Ascending aorta (tissue), 2 donors: ENCODE measurements at regions of chr12 and their contacts with region 1.

Region 1: DNA sequence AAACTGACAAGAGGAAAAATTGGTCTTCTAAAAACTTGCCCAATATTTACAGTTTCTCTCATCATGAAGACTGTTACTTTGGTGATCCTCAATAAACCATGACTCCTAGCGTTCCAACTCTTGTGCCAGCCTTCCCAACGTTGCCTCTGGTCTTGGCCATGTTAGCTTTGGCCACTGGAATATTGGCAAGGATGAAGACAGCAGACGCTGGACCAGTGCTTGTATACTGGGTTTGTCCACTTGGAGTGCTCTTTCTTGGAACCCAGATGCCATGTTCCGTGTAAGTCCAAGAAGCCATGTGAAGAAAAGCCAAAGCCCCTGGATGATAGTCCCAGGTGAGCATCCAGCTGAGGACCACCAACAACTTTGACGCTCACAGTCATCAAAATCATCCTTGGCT is 379.6 kb downstream of the NUAK1 start:
- DNase-seq: no peak
- H3K4me3 ChIP-seq: no peak overlapping the region
- H3K27ac ChIP-seq: no peak overlapping the region
- H3K4me1 ChIP-seq: no peaks in the 10 kb centered on the region
- H3K27me3 ChIP-seq: no peaks in the 10 kb centered on the region
- CTCF ChIP-seq: no peak

Region 2: GRCh38 chr12:105716621-105717020 is 42.5 kb before region 1 on chr12:
- intact Hi-C with region 1: loop called (anchors 5 kb)
- DNase-seq: no peak
- H3K4me3 ChIP-seq: no peak overlapping the region
- H3K27ac ChIP-seq: no peak overlapping the region
- H3K4me1 ChIP-seq: no peaks in the 10 kb centered on the region
- H3K27me3 ChIP-seq: no peaks in the 10 kb centered on the region
- CTCF ChIP-seq: no peak

Region 3: GRCh38 chr12:105775343-105775742 is 16.2 kb after region 1 on chr12:
- intact Hi-C with region 1: no loop called
- DNase-seq: no peak
- H3K4me3 ChIP-seq: no peak overlapping the region
- H3K27ac ChIP-seq: no peak overlapping the region
- H3K4me1 ChIP-seq: peaks cover 8 to 11% of the 10 kb centered on the region in 2 donors
- H3K27me3 ChIP-seq: no peaks in the 10 kb centered on the region
- CTCF ChIP-seq: no peak

Region 4: GRCh38 chr12:105843986-105844760 is 85.0 kb after region 1 on chr12:
- intact Hi-C with region 1: no loop called
- DNase-seq: no peak
- H3K4me3 ChIP-seq: no peak overlapping the region
- H3K27ac ChIP-seq: no peak overlapping the region
- H3K4me1 ChIP-seq: no peaks in the 10 kb centered on the region
- H3K27me3 ChIP-seq: no peaks in the 10 kb centered on the region
- CTCF ChIP-seq: no peak